CD4-positive, alpha-beta T cell (primary cell): ENCODE measurements at regions of chr7 and their contacts with region 1.

Region 1: GRCh38 chr7:23181684-23182553 is at the start of gene NUP42:
- DNase-seq: peak; percentile 87 to 98 (median 92)
- ATAC-seq: peak; percentile 91
- H3K4me3 ChIP-seq: peak within 1 kb of the TSS; percentile 88
- H3K4me3 Mint-ChIP-seq: peak within 1 kb of the TSS; percentile 96
- H3K27ac ChIP-seq: peak within 1 kb of the TSS; percentile 71 to 81
- H3K27ac Mint-ChIP-seq: peak within 1 kb of the TSS; percentile 97
- H3K4me1 ChIP-seq: peaks cover 18% of the 10 kb centered on the region
- H3K4me1 Mint-ChIP-seq: peaks cover 29% of the 10 kb centered on the region
- H3K27me3 ChIP-seq: no peaks in the 10 kb centered on the region
- H3K27me3 Mint-ChIP-seq: no peaks in the 10 kb centered on the region
- CTCF ChIP-seq: no peak
- total RNA-seq, gene NUP42: 19.4 to 20.1 TPM

Region 2: GRCh38 chr7:22822486-22823141 is 359.3 kb before region 1 on chr7 and contains the start of gene TOMM7:
- CTCF ChIA-PET with region 1: no interaction called
- POLR2A ChIA-PET with region 1: no interaction called
- intact Hi-C with region 1: loop called in 1 of 2 experiments (anchors 2 kb)
- DNase-seq: peak; percentile 75 to 98 (median 84)
- ATAC-seq: peak; percentile 93
- H3K4me3 ChIP-seq: peak within 1 kb of the TSS; percentile 65
- H3K4me3 Mint-ChIP-seq: peak within 1 kb of the TSS; percentile 98
- H3K27ac ChIP-seq: peak within 1 kb of the TSS; percentile 46 to 66
- H3K27ac Mint-ChIP-seq: peak within 1 kb of the TSS; percentile 92
- H3K4me1 ChIP-seq: peaks cover 28% of the 10 kb centered on the region
- H3K4me1 Mint-ChIP-seq: peaks cover 49% of the 10 kb centered on the region
- H3K27me3 ChIP-seq: no peaks in the 10 kb centered on the region
- H3K27me3 Mint-ChIP-seq: peaks cover 15% of the 10 kb centered on the region
- CTCF ChIP-seq: no peak
- total RNA-seq, gene TOMM7: 503 to 549 TPM

Region 3: GRCh38 chr7:22854158-22855048 is 327.5 kb before region 1 on chr7:
- CTCF ChIA-PET with region 1: no interaction called
- POLR2A ChIA-PET with region 1: no interaction called
- intact Hi-C with region 1: loop called in 1 of 2 experiments (anchors 10 kb)
- DNase-seq: peak; percentile 30 to 90 (median 68)
- ATAC-seq: peak; percentile 21
- H3K4me3 ChIP-seq: peak overlapping the region; percentile 97
- H3K4me3 Mint-ChIP-seq: peak overlapping the region; percentile 97
- H3K27ac ChIP-seq: peak overlapping the region; percentile 69 to 75
- H3K27ac Mint-ChIP-seq: peak overlapping the region; percentile 92
- H3K4me1 ChIP-seq: peaks cover 21% of the 10 kb centered on the region
- H3K4me1 Mint-ChIP-seq: peaks cover 30% of the 10 kb centered on the region
- H3K27me3 ChIP-seq: no peaks in the 10 kb centered on the region
- H3K27me3 Mint-ChIP-seq: peaks cover 3% of the 10 kb centered on the region
- CTCF ChIP-seq: peak; percentile 71

Region 4: DNA sequence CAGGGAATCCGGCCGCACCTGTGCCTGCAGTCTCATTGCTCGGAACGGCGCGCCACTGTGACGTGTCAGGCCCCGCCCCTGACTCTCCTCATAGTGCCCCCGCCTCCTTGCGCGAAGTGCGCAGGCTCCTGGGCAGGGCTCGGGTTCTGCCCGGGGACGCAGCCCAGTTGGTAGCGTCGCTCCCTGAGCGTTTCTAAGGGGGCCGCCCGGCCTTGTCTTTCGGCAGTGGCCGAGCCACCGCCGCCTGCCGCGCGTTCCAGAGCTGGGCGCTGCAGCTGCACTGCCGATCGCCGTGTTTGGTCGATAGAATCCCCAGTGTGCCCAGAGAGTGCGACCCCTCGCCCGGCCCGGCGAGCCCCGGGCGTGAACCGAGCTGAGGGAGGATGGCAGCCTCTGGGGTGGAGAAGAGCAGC is 76.3 kb before region 1 on chr7 and contains the start of gene KLHL7:
- CTCF ChIA-PET with region 1: interaction called, 7 read pairs
- POLR2A ChIA-PET with region 1: interaction called, 79 read pairs
- intact Hi-C with region 1: loop called (anchors 1 kb)
- DNase-seq: peak; percentile 89 to 98 (median 96)
- ATAC-seq: peak; percentile 94
- H3K4me3 ChIP-seq: peak within 1 kb of the TSS; percentile 98
- H3K4me3 Mint-ChIP-seq: peak within 1 kb of the TSS; percentile 98
- H3K27ac ChIP-seq: peak within 1 kb of the TSS; percentile 94
- H3K27ac Mint-ChIP-seq: peak within 1 kb of the TSS; percentile 96
- H3K4me1 ChIP-seq: peaks cover 19% of the 10 kb centered on the region
- H3K4me1 Mint-ChIP-seq: peaks cover 52% of the 10 kb centered on the region
- H3K27me3 ChIP-seq: no peaks in the 10 kb centered on the region
- H3K27me3 Mint-ChIP-seq: no peaks in the 10 kb centered on the region
- CTCF ChIP-seq: no peak
- total RNA-seq, gene KLHL7: 14.3 to 19.6 TPM

Region 5: DNA sequence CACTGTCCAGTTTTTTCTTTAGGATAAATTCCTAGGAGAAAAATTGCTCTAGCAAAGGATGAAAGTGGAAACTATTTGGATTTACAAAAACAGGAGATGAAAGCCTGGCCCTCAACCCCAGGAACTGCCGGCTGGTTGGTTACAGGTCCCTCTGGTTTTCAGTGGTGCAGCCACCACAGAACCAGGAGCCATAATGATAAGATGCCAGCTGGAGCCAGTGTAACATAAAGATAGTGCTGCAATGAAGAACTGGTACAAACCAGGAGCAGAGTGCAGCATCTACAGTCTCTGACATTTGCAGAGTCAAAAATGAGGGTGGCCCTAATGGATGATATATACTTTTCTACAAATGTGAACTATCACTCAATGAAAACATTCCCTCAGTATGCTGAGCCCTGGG is 20.4 kb before region 1 on chr7:
- CTCF ChIA-PET with region 1: no interaction called
- POLR2A ChIA-PET with region 1: no interaction called
- intact Hi-C with region 1: no loop called
- DNase-seq: no peak
- ATAC-seq: no peak
- H3K4me3 ChIP-seq: no peak overlapping the region
- H3K4me3 Mint-ChIP-seq: no peak overlapping the region
- H3K27ac ChIP-seq: no peak overlapping the region
- H3K27ac Mint-ChIP-seq: no peak overlapping the region
- H3K4me1 ChIP-seq: no peaks in the 10 kb centered on the region
- H3K4me1 Mint-ChIP-seq: no peaks in the 10 kb centered on the region
- H3K27me3 ChIP-seq: no peaks in the 10 kb centered on the region
- H3K27me3 Mint-ChIP-seq: no peaks in the 10 kb centered on the region
- CTCF ChIP-seq: no peak

Region 6: GRCh38 chr7:23520582-23520981 is 338.7 kb after region 1 on chr7:
- CTCF ChIA-PET with region 1: no interaction called
- POLR2A ChIA-PET with region 1: no interaction called
- intact Hi-C with region 1: loop called in 1 of 2 experiments (anchors 10 kb)
- DNase-seq: no peak
- ATAC-seq: no peak
- H3K4me3 ChIP-seq: no peak overlapping the region
- H3K4me3 Mint-ChIP-seq: no peak overlapping the region
- H3K27ac ChIP-seq: no peak overlapping the region
- H3K27ac Mint-ChIP-seq: no peak overlapping the region
- H3K4me1 ChIP-seq: peaks cover 20% of the 10 kb centered on the region
- H3K4me1 Mint-ChIP-seq: peaks cover 52% of the 10 kb centered on the region
- H3K27me3 ChIP-seq: no peaks in the 10 kb centered on the region
- H3K27me3 Mint-ChIP-seq: no peaks in the 10 kb centered on the region
- CTCF ChIP-seq: no peak